GM12878 (cell line): ENCODE measurements at regions of chr13 and their contacts with region 1.

Region 1: DNA sequence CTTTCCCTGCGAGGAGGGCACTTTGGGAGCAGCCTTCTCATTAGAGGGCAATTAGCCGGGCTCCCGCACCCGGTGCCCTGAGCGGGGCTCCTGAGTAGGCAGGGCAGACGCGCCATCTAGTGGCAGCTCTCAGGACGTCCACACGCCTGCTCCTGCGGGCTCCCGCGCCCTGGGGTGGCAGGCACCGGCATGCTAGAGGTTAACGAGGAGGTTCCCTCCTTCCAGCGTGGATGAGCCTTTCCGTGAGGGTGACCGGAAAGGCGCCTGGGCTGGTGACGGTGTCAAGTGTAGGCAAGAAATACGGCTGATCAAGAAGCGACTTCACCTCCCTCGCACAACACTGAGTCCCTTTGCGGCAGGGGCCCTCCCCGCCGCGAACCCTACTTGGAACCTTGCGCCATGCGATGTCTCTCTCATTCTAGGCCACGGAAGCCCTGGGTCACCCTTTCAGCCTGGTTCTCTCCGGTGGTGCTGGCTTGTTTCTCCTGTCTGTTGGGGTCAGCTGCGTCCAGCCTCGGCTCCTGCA is 67.7 kb downstream of the ALOX5AP start:
- DNase-seq: peak; percentile 32
- ATAC-seq: peak; percentile 100
- H3K4me3 ChIP-seq: no peak overlapping the region
- H3K27ac ChIP-seq: no peak overlapping the region
- H3K4me1 ChIP-seq: no peaks in the 10 kb centered on the region
- H3K27me3 ChIP-seq: no peaks in the 10 kb centered on the region; a peak in 1 of 4 replicates
- CTCF ChIP-seq: peak; percentile 88 to 95 (median 92)
- EP300 ChIP-seq: no peak
- POLR2A ChIP-seq: no peak
- RAD21 ChIP-seq: peak; percentile 95

Region 2: DNA sequence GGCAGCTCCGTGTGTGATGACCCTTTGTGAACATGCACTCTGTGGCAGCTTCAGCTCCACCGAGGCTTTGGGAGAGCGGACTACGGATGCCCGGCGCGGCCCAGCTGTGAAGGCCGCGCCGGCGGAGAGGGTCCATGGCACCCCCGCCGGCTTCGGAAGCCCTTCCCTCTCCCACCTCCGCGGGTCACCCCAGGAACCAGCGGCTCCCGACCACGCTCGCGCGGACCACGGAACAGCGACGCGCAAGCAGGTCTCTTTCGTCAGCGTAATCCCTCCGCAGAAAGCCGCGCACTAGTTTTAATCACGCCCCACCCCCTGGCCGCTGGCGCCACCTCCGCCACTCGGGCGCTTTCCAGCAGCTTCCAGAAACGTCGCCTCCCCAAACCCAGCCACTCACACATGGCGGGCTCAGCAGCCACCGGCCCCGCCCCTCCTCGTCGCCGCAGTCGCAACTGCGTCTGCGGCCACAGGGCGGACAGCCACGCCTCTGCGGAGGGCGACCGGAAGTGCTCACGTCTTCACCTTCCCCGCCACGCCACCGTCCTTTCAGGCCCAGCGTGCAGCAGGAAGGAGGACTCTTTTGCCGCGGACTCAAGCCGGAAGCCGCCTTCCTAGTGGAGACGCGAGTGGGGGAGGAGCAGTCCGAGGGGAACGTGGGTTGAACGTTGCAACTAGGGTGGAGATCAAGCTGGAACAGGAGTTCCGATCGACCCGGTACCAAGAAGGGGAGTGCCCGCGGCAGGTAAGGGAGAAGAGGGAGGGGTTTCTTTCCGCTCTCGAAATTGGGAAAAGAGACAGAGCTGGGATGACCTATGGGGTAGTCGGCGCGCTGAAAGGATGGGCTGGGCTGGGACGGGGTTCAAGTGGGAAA is 185.5 kb before region 1 on chr13 and contains the start of gene USPL1:
- CTCF ChIA-PET with region 1: interaction called, 3 read pairs
- POLR2A ChIA-PET with region 1: no interaction called
- RAD21 ChIA-PET with region 1: no interaction called
- SMC1A ChIA-PET with region 1: interaction called, 23 read pairs
- in situ Hi-C with region 1: no loop called
- intact Hi-C with region 1: loop called (anchors 2 kb)
- DNase-seq: peak; percentile 96
- ATAC-seq: peak; percentile 91
- H3K4me3 ChIP-seq: peak within 1 kb of the TSS; percentile 91
- H3K27ac ChIP-seq: peak within 1 kb of the TSS; percentile 93
- H3K4me1 ChIP-seq: peaks cover 8% of the 10 kb centered on the region
- H3K27me3 ChIP-seq: no peaks in the 10 kb centered on the region
- CTCF ChIP-seq: peak in 1 of 3 experiments; percentile 6; a peak in 1 of 6 replicates
- EP300 ChIP-seq: peak; percentile 84 to 95
- POLR2A ChIP-seq: peak; percentile 93
- RAD21 ChIP-seq: peak; percentile 17; the same call in 1 of the 2 replicates
- polyA plus RNA-seq, gene USPL1: 7.9 to 8.0 TPM

Region 3: DNA sequence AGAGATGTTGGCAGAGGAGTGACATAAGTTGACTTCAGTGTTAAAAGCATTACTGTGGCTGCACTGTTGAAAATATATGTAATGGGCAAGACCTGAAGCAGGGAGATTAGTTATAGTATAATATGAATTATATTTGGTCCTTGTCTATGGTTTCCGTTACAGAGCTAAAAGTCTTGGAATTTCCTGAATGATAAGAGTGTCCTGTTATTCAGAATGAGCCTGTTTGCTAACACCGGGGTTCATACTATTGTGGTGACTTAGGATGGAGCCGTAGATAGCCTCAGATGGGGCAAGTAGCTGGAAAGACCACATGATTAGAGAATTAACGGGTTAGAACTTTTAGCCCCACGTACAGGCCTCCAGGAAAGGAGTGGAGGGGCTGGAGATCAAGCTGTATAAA is 179.6 kb before region 1 on chr13:
- CTCF ChIA-PET with region 1: interaction called, 3 read pairs
- POLR2A ChIA-PET with region 1: no interaction called
- RAD21 ChIA-PET with region 1: no interaction called
- SMC1A ChIA-PET with region 1: interaction called, 23 read pairs
- in situ Hi-C with region 1: no loop called
- intact Hi-C with region 1: loop called (anchors 2 kb)
- DNase-seq: no peak
- ATAC-seq: no peak
- H3K4me3 ChIP-seq: no peak overlapping the region
- H3K27ac ChIP-seq: no peak overlapping the region
- H3K4me1 ChIP-seq: peaks cover 7% of the 10 kb centered on the region
- H3K27me3 ChIP-seq: no peaks in the 10 kb centered on the region
- CTCF ChIP-seq: no peak
- EP300 ChIP-seq: no peak
- POLR2A ChIP-seq: no peak
- RAD21 ChIP-seq: no peak

Region 4: DNA sequence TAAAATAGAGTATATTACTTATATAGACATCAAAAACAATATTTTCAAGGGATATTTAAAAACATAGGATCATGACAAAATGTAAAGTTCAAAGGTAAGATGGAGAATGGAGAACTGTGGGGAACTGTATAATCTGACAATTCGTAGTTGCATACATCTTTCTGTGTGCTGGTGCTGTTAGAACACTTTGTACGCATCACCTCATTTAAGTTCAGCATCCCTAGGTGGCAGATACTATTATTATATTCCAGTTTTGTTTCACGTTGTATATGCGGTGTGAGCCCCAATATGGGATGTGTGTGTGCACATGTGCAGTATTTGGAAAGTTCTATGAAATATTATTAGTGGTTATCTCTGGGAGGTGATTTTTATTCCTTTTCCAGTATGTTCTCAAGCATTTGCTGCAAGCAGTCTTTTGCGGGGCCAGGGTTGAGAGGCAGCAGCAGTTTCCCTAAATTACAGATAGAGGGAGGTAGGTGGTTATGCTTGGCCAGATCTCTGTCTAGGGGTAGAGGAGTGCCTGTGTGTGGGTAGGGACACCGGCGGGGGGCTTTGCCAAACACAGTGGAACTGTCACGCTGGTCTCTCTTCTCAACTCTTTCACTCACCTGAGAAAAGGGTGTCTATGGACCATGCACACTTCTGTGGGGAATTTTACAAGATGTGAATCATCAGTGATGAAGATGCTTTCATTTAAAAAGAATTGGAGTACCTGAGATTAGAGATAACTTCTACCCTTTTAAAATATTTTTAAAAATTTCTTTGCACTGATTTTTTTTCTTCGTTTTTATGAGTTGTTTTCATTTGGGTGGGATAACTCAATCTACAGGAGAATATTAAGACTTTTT is 123.3 kb before region 1 on chr13:
- CTCF ChIA-PET with region 1: interaction called, 16 read pairs
- POLR2A ChIA-PET with region 1: interaction called, 5 read pairs
- RAD21 ChIA-PET with region 1: interaction called, 10 read pairs
- SMC1A ChIA-PET with region 1: interaction called, 15 read pairs
- in situ Hi-C with region 1: loop called (anchors 5 kb)
- intact Hi-C with region 1: loop called (anchors 1 kb)
- DNase-seq: no peak
- ATAC-seq: peak; percentile 96
- H3K4me3 ChIP-seq: no peak overlapping the region
- H3K27ac ChIP-seq: no peak overlapping the region
- H3K4me1 ChIP-seq: no peaks in the 10 kb centered on the region
- H3K27me3 ChIP-seq: 0 out of 4 replicates have a peak, but pooled peaks cover 0 to 2% of the 10 kb centered on the region in 2 experiments
- CTCF ChIP-seq: peak; percentile 63 to 73 (median 71)
- EP300 ChIP-seq: no peak
- POLR2A ChIP-seq: no peak
- RAD21 ChIP-seq: peak; percentile 86

Region 5: GRCh38 chr13:30692113-30692512 is 110.9 kb before region 1 on chr13:
- CTCF ChIA-PET with region 1: no interaction called
- POLR2A ChIA-PET with region 1: no interaction called
- RAD21 ChIA-PET with region 1: no interaction called
- SMC1A ChIA-PET with region 1: no interaction called
- in situ Hi-C with region 1: no loop called
- intact Hi-C with region 1: no loop called
- DNase-seq: no peak
- ATAC-seq: no peak
- H3K4me3 ChIP-seq: no peak overlapping the region
- H3K27ac ChIP-seq: no peak overlapping the region
- H3K4me1 ChIP-seq: peaks cover 9% of the 10 kb centered on the region
- H3K27me3 ChIP-seq: 0 out of 4 replicates have a peak, but pooled peaks cover 0 to 2% of the 10 kb centered on the region in 2 experiments
- CTCF ChIP-seq: no peak
- EP300 ChIP-seq: no peak
- POLR2A ChIP-seq: no peak
- RAD21 ChIP-seq: no peak

Region 6: DNA sequence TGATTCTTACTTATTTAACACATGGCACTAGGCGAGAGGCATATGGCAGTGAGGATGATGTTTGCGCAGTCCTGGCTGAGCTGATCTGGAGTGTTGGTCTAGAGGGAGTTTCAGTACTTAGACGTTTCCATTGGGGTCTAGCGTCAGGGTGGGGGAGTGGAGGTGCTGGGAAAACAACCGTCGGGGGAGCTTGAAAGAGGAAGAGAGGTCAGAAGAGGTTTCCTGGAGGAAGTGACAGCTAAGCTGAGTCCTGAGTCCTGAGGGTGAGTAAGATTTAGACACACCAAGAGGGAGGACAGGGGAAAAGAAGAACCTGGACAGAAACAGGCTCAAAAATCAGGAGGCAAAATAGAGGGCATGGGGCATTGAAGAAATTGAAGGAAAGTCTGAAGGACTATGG is 13.7 kb after region 1 on chr13:
- CTCF ChIA-PET with region 1: interaction called, 12 read pairs
- POLR2A ChIA-PET with region 1: no interaction called
- RAD21 ChIA-PET with region 1: no interaction called
- SMC1A ChIA-PET with region 1: no interaction called
- in situ Hi-C with region 1: no loop called
- intact Hi-C with region 1: no loop called
- DNase-seq: no peak
- ATAC-seq: no peak
- H3K4me3 ChIP-seq: no peak overlapping the region
- H3K27ac ChIP-seq: no peak overlapping the region
- H3K4me1 ChIP-seq: no peaks in the 10 kb centered on the region
- H3K27me3 ChIP-seq: no peaks in the 10 kb centered on the region; a peak in 2 of 4 replicates
- CTCF ChIP-seq: no peak
- EP300 ChIP-seq: no peak
- POLR2A ChIP-seq: no peak
- RAD21 ChIP-seq: no peak

Region 7: GRCh38 chr13:30865123-30866049 is 62.4 kb after region 1 on chr13:
- CTCF ChIA-PET with region 1: interaction called, 12 read pairs
- POLR2A ChIA-PET with region 1: no interaction called
- RAD21 ChIA-PET with region 1: interaction called, 10 read pairs
- SMC1A ChIA-PET with region 1: interaction called, 5 read pairs
- in situ Hi-C with region 1: no loop called
- intact Hi-C with region 1: no loop called
- DNase-seq: no peak
- ATAC-seq: peak; percentile 98
- H3K4me3 ChIP-seq: no peak overlapping the region
- H3K27ac ChIP-seq: no peak overlapping the region
- H3K4me1 ChIP-seq: no peaks in the 10 kb centered on the region
- H3K27me3 ChIP-seq: peaks cover 0 to 4% of the 10 kb centered on the region in 2 experiments; a peak in 2 of 4 replicates
- CTCF ChIP-seq: peak; percentile 91 to 92 (median 92)
- EP300 ChIP-seq: no peak
- POLR2A ChIP-seq: no peak
- RAD21 ChIP-seq: peak; percentile 93

Region 8: DNA sequence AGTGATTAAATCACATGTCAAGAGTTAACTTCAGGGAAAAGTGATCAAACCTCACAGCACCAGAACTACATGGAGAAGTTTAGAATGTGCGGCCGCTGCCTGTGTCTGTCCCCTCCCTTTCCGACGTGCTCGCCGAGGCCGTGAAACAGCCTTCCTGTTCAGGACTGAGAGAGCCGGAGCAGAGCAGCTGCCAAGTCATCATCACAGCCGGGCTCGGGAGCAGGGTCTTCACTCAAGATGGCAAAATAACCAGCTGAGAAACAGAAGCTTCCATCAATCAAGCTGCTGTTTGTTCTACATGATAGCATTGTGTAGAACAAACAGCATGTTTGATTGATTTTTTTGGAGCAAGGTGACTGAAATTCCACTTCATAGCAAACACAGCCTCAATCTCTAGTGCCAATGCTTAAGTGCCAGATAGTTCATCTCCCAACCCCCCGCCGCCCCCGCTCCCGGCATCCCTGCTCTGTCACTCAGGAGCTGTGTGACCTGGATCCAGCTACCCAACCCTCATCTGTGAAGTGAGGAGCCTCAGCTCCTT is 288.0 kb after region 1 on chr13:
- CTCF ChIA-PET with region 1: no interaction called
- POLR2A ChIA-PET with region 1: no interaction called
- RAD21 ChIA-PET with region 1: no interaction called
- SMC1A ChIA-PET with region 1: no interaction called
- in situ Hi-C with region 1: no loop called
- intact Hi-C with region 1: no loop called
- DNase-seq: no peak
- ATAC-seq: no peak
- H3K4me3 ChIP-seq: no peak overlapping the region
- H3K27ac ChIP-seq: no peak overlapping the region
- H3K4me1 ChIP-seq: no peaks in the 10 kb centered on the region; the same call in 1 of the 2 replicates
- H3K27me3 ChIP-seq: peaks cover 0 to 3% of the 10 kb centered on the region in 2 experiments; a peak in 3 of 4 replicates
- CTCF ChIP-seq: no peak
- EP300 ChIP-seq: no peak
- POLR2A ChIP-seq: no peak
- RAD21 ChIP-seq: no peak